ENCODE measurements at regions of chr11 and their contacts with region 1.

Region 1: GRCh38 chr11:65888163-65888814 is at the start of gene FIBP:
- DNase-seq: peak; percentile 90
- ATAC-seq: peak; percentile 74
- H3K4me3 ChIP-seq: peak within 1 kb of the TSS; percentile 74 to 91 (median 87)
- H3K27ac ChIP-seq: peak within 1 kb of the TSS; percentile 58
- H3K4me1 ChIP-seq: peaks cover 72% of the 10 kb centered on the region
- H3K27me3 ChIP-seq: no peaks in the 10 kb centered on the region; a peak in 1 of 5 replicates
- CTCF ChIP-seq: peak; percentile 94
- EP300 ChIP-seq: peak in 1 of 2 experiments; percentile 60; a peak in 1 of 4 replicates
- POLR2A ChIP-seq: peak in 1 of 2 experiments; percentile 80; a peak in 2 of 4 replicates
- RAD21 ChIP-seq: peak; percentile 78; the same call in 1 of the 2 replicates
- total RNA-seq, gene FIBP: 62.1 and 66.0 TPM in 2 replicates

Region 2: GRCh38 chr11:65859200-65859811 is 29.0 kb before region 1 on chr11:
- CTCF ChIA-PET with region 1: interaction called, 6 read pairs
- POLR2A ChIA-PET with region 1: interaction called, 78 read pairs
- in situ Hi-C with region 1: no loop called
- intact Hi-C with region 1: loop called (anchors 2 kb)
- DNase-seq: peak; percentile 98
- ATAC-seq: peak; percentile 78
- H3K4me3 ChIP-seq: peak overlapping the region; percentile 80 to 99 (median 89)
- H3K27ac ChIP-seq: peak overlapping the region; percentile 90
- H3K4me1 ChIP-seq: peaks cover 53% of the 10 kb centered on the region
- H3K27me3 ChIP-seq: no peaks in the 10 kb centered on the region; a peak in 1 of 5 replicates
- CTCF ChIP-seq: peak; percentile 45
- EP300 ChIP-seq: no peak
- POLR2A ChIP-seq: peak in 1 of 2 experiments; percentile 88; a peak in 2 of 4 replicates
- RAD21 ChIP-seq: no peak

Region 3: DNA sequence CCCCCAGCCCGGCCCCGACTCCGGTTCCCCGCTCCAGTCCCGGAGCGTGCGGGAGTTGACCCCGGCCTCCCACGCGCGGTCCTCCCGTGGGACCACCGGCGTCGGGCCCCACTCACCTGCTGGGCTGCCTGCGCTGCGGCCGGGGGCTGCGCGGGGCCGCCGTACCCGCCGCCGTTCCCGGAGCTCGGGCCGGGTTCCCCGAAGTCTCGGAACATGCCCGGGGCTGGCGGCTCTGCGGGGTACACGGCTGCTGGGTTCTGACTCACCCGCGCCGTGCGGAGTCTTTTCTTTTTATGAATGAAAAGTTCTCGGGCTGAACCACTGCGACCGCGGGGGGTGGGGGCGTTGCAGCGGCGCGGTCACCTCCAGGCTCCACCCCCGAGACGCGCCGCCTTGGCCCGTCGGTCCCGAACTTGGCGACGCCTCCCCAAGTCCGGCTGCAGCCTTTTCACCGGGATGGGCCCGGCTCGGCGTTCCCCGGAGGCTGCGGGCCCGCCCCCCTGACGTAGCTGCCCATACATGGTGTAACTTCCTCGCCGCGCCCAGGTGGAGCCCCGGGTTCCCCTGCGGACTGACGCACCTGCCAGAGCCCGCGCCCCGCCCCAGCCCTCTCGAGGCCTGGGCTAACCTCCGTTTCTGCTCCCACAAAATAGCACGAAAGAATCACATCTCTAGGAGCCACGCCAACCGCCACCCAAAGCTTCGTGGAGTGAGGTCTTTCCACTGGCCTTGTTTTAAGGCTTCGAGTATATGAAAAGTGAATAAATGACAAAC is 12.0 kb after region 1 on chr11 and contains the start of gene FOSL1:
- CTCF ChIA-PET with region 1: interaction called, 3 read pairs
- POLR2A ChIA-PET with region 1: interaction called, 95 read pairs
- in situ Hi-C with region 1: no loop called
- intact Hi-C with region 1: no loop called
- DNase-seq: peak; percentile 85
- ATAC-seq: peak; percentile 74
- H3K4me3 ChIP-seq: peak within 1 kb of the TSS; percentile 84 to 89 (median 89)
- H3K27ac ChIP-seq: peak within 1 kb of the TSS; percentile 66
- H3K4me1 ChIP-seq: peaks cover 55% of the 10 kb centered on the region
- H3K27me3 ChIP-seq: no peaks in the 10 kb centered on the region; a peak in 1 of 5 replicates
- CTCF ChIP-seq: peak; percentile 15; the same call in 1 of the 2 replicates
- EP300 ChIP-seq: no peak
- POLR2A ChIP-seq: peak in 1 of 2 experiments; percentile 88; a peak in 2 of 4 replicates
- RAD21 ChIP-seq: peak; percentile 31; the same call in 1 of the 2 replicates
- total RNA-seq, gene FOSL1: 3.1 and 4.0 TPM in 2 replicates

Region 4: DNA sequence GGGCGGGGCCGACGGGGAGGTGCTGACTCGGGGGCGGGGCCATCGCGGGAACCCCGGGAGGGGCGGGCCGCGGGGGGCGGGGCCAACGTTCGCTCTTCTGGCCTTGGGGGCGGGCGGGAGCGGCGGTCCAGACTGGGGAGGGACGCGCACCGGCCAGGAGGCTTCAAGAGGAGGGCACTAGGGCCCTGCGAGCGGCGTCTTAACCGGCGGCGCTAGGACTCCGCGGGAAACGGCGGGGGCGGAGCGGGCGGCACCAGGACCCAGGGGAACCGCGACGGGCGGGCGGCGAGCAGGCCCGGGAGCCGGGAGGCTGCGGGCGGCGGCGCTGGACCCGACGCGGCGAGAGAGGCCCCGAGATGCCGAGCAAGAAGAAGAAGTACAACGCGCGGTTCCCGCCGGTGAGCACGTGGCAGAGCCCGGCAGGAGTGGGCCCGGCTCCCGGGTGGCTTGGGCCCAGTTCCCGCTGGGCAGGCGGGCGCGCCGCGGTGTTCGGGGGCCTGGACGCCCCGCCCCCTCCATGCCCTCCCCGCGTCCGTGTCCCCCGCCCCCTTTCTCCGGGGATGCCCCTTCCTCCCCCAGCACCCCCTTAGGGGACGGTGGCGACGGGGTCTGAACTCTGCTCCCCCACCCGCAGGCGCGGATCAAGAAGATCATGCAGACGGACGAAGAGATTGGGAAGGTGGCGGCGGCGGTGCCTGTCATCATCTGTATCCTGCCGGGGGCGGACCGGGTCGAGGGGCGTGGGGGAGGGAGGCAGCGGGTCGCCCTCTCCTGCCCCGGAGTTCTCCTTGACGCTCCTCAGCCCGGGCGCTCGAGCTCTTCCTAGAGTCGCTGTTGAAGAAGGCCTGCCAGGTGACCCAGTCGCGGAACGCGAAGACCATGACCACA is 31.1 kb after region 1 on chr11 and contains the start of gene DRAP1:
- CTCF ChIA-PET with region 1: no interaction called
- POLR2A ChIA-PET with region 1: interaction called, 59 read pairs
- in situ Hi-C with region 1: no loop called
- intact Hi-C with region 1: loop called (anchors 2 kb)
- DNase-seq: peak; percentile 94
- ATAC-seq: peak; percentile 89
- H3K4me3 ChIP-seq: peak within 1 kb of the TSS; percentile 88 to 98 (median 92)
- H3K27ac ChIP-seq: peak within 1 kb of the TSS; percentile 75
- H3K4me1 ChIP-seq: peaks cover 46% of the 10 kb centered on the region
- H3K27me3 ChIP-seq: no peaks in the 10 kb centered on the region
- CTCF ChIP-seq: 0 out of 2 replicates have a peak, but pooled peaks have one; percentile 17
- EP300 ChIP-seq: peak in 1 of 2 experiments; percentile 36; a peak in 1 of 4 replicates
- POLR2A ChIP-seq: peak in 1 of 2 experiments; percentile 46; a peak in 2 of 4 replicates
- RAD21 ChIP-seq: peak; percentile 79
- total RNA-seq, gene DRAP1: 31.5 and 52.3 TPM in 2 replicates

Region 5: GRCh38 chr11:65961232-65961901 is 73.1 kb after region 1 on chr11 and contains the start of gene SART1:
- CTCF ChIA-PET with region 1: interaction called, 3 read pairs
- POLR2A ChIA-PET with region 1: interaction called, 7 read pairs
- in situ Hi-C with region 1: no loop called
- intact Hi-C with region 1: loop called (anchors 1 kb)
- DNase-seq: peak; percentile 96
- ATAC-seq: peak; percentile 88
- H3K4me3 ChIP-seq: peak within 1 kb of the TSS; percentile 89 to 97 (median 97)
- H3K27ac ChIP-seq: peak within 1 kb of the TSS; percentile 89
- H3K4me1 ChIP-seq: peaks cover 61% of the 10 kb centered on the region
- H3K27me3 ChIP-seq: no peaks in the 10 kb centered on the region; a peak in 1 of 5 replicates
- CTCF ChIP-seq: peak; percentile 35
- EP300 ChIP-seq: peak in 1 of 2 experiments; percentile 40; a peak in 2 of 4 replicates
- POLR2A ChIP-seq: peak; percentile 88 to 95
- RAD21 ChIP-seq: 0 out of 2 replicates have a peak, but pooled peaks have one; percentile 38
- total RNA-seq, gene SART1: 18.1 and 22.5 TPM in 2 replicates

Region 6: DNA sequence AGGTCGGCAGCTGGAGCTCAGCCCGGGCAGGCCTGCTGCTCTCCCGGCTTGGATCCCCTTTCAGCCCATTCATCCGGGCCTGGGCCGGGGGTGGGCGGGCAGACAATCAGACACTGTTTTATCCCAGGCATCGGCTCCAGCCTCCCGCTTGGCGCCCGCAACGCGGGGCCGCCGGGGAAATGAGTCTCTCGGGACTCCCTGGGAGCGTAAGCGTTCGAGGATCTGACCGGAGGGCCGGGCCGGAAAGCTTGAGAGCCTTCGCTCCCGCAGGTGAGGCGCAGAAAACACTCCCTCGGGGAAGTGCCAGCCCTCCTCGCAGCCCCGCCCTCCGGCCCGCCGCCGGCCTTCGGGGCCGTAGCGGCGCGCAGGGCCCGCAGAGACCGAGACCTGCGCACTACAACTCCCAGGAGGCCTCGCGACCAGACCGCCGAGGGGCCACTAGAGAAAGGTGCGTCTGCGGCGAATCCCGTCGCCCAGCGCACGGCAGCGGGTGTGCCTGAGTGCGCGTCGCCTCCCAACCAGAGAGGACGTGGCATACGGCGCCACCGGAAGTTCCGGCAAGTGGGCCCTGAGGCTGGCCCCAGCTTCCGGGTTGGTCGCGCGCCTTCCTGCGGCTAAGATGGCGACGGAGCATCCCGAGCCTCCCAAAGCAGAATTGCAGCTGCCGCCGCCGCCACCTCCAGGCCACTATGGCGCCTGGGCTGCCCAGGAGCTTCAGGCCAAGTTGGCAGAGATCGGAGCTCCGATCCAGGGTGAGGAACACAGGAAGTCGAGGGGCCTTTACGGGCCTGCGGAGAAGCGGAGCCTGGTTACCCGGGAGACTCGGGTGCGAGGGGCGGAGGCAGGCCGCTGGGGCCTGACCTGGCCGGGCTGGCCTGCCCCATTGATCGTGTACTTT is 163.7 kb after region 1 on chr11 and contains the start of gene SF3B2:
- CTCF ChIA-PET with region 1: no interaction called
- POLR2A ChIA-PET with region 1: interaction called, 14 read pairs
- in situ Hi-C with region 1: no loop called
- intact Hi-C with region 1: no loop called
- DNase-seq: peak; percentile 95
- ATAC-seq: peak; percentile 96
- H3K4me3 ChIP-seq: peak within 1 kb of the TSS; percentile 83 to 93 (median 93)
- H3K27ac ChIP-seq: peak within 1 kb of the TSS; percentile 79
- H3K4me1 ChIP-seq: peaks cover 40% of the 10 kb centered on the region
- H3K27me3 ChIP-seq: peaks cover 0 to 23% of the 10 kb centered on the region in 2 experiments; a peak in 3 of 5 replicates
- CTCF ChIP-seq: peak; percentile 24; the same call in 1 of the 2 replicates
- EP300 ChIP-seq: no peak
- POLR2A ChIP-seq: peak; percentile 76 to 82
- RAD21 ChIP-seq: 0 out of 2 replicates have a peak, but pooled peaks have one; percentile 20
- total RNA-seq, gene SF3B2: 153 and 162 TPM in 2 replicates

Measured in HepG2 (cell line).